Activated naive CD4-positive, alpha-beta T cell treated with anti-CD3 and anti-CD28 coated beads for 36 hours (primary cell): ENCODE measurements at regions of chr9 and their contacts with region 1.

Region 1: GRCh38 chr9:22452415-22453010 is 5.9 kb downstream of the DMRTA1 start:
- DNase-seq: peak; percentile 68
- H3K4me3 Mint-ChIP-seq: no peak overlapping the region
- H3K27ac Mint-ChIP-seq: no peak overlapping the region
- H3K4me1 Mint-ChIP-seq: peaks cover 2% of the 10 kb centered on the region
- H3K27me3 Mint-ChIP-seq: peaks cover 37% of the 10 kb centered on the region

Region 2: GRCh38 chr9:21688108-21689102 is 764.1 kb before region 1 on chr9:
- CTCF ChIA-PET with region 1: no interaction called
- intact Hi-C with region 1: no loop called
- DNase-seq: no peak
- H3K4me3 Mint-ChIP-seq: no peak overlapping the region
- H3K27ac Mint-ChIP-seq: peak overlapping the region; percentile 17
- H3K4me1 Mint-ChIP-seq: peaks cover 64% of the 10 kb centered on the region
- H3K27me3 Mint-ChIP-seq: no peaks in the 10 kb centered on the region

Region 3: DNA sequence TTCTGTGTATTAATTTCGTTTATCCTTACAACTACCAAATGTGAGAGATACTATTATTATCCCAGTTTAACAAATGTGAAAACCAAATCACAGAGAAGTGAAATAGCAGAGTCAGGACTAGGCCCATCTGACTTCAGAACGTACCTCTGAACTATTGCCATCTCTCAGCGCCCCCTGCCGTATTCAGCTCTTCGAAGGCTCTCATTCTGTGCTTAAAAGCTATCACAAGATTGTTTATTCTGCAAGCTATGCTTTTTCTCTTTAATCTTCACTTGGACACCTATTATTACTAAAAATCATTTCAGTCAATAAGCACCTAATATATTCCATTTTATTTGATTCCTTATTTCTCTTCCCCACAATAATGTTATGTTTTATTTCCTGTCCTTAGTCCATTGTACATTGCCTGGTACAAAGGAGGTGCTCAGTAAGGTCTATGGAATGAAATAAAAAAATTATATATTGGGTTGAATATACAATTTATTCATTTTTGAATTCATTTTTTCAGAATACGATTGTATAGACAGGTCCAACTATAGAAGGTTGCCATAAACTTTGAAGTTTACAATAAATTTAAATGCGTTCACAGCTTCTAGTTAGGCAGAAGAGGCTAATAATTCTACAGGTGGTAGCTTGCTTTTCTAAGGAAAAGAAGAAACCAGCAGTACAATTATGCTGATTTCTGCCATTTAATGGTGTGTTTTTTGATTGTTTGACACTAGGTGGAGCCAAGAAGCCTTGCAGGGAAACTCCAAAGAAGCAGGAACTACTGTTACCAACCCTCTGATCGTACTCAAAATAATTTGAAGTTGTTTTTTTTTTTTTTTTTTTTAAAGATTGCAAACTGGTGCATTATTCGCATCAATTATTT is 208.1 kb before region 1 on chr9:
- CTCF ChIA-PET with region 1: interaction called, 33 read pairs
- intact Hi-C with region 1: loop called (anchors 1 kb)
- DNase-seq: peak; percentile 46
- H3K4me3 Mint-ChIP-seq: no peak overlapping the region
- H3K27ac Mint-ChIP-seq: no peak overlapping the region
- H3K4me1 Mint-ChIP-seq: peaks cover 29% of the 10 kb centered on the region
- H3K27me3 Mint-ChIP-seq: peaks cover 19% of the 10 kb centered on the region

Region 4: DNA sequence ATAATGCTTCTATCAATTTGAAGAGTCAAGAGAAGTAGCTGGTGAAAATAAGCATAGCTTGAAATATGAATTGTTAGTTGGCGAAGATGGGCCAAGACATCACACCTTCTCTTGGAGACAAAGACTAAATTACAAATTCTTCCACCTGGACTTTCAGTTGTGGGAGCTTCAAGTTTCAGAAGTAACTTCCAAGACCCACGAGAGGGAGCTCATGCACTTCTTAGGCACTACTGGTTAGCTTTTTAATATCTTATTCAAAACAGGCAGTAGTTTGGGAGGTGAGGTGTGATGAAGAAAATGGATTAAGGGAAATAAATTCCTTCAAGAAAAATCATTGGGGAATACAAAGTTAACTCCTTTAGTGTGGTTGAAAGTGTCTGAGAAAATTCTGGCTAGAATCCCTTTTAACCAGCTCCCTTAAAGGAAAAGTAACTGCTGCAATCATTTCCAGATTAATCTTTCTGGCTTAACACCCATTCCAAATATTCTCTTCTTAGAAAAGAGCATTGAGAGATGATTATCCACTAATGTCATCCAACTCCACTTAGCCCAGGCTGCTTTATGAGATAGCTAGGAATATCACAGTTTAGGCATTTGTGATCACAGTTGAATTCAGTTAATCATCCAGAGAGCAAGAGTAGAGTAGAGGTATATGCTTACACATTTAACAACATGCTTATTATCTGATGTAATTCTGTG is 145.4 kb before region 1 on chr9:
- CTCF ChIA-PET with region 1: interaction called, 7 read pairs
- intact Hi-C with region 1: loop called (anchors 1 kb)
- DNase-seq: peak; percentile 24
- H3K4me3 Mint-ChIP-seq: no peak overlapping the region
- H3K27ac Mint-ChIP-seq: no peak overlapping the region
- H3K4me1 Mint-ChIP-seq: no peaks in the 10 kb centered on the region
- H3K27me3 Mint-ChIP-seq: peaks cover 7% of the 10 kb centered on the region

Region 5: DNA sequence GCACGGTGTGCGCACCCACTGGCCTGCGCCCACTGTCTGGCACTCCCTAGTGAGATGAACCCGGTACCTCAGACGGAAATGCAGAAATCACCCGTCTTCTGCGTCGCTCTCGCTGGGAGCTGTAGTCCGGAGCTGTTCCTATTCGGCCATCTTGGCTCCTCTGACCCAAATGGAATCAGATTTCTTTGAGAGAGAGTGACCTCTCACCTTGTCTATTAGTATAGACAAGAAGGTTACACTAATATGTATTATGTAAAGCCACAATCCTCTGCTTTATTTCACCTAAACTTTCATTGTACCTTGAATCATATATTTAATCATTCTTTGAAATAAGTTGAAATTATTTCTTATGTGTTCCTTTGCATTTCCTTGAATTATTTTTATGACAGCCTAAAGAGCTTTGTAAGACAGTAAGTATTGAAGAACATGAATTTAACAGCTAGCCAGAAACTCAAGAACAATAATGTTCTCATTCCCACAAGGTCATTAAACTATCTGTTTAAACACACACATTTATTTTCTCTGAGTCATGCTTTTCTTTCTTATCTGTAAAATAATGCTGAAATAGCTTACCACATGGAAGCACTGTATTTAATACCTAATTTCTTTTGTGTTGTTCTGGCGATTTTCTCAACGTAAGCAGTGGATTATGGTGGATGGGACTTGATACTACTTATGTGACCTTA is 97.7 kb before region 1 on chr9:
- CTCF ChIA-PET with region 1: no interaction called
- intact Hi-C with region 1: no loop called
- DNase-seq: no peak
- H3K4me3 Mint-ChIP-seq: no peak overlapping the region
- H3K27ac Mint-ChIP-seq: no peak overlapping the region
- H3K4me1 Mint-ChIP-seq: no peaks in the 10 kb centered on the region
- H3K27me3 Mint-ChIP-seq: no peaks in the 10 kb centered on the region